ENCODE measurements at regions of chr5 and their contacts with region 1.

Region 1: DNA sequence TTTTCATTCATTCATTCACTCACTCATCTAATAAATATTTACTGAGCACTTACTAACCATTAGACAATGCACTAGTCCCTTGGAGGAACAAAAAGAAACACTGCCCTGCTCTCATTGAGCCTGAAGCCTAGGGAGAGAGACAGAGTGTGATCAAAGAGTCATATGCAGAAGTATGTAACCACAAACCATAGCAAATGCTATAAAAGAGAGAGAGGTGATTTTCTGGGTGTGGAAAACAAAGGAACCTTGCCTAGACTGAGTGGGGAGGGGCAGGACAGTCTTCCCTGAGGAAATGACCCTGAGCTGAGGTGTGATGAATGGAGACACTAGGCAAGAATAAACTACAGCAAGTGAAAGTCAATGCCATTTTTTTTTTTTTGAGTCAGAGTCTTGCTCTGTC is 10.8 kb upstream of the ADRA1B start:
- DNase-seq: peak; percentile 89 to 99
- H3K4me3 ChIP-seq: no peak overlapping the region
- H3K27ac ChIP-seq: peak overlapping the region; percentile 97
- H3K4me1 ChIP-seq: peaks cover 87% of the 10 kb centered on the region
- H3K27me3 ChIP-seq: no peaks in the 10 kb centered on the region
- CTCF ChIP-seq: no peak

Region 2: GRCh38 chr5:159341914-159342313 is 563.6 kb before region 1 on chr5:
- CTCF ChIA-PET with region 1: no interaction called
- POLR2A ChIA-PET with region 1: no interaction called
- intact Hi-C with region 1: loop called (anchors 5 kb)
- DNase-seq: peak; percentile 83 to 88
- H3K4me3 ChIP-seq: no peak overlapping the region
- H3K27ac ChIP-seq: no peak overlapping the region
- H3K4me1 ChIP-seq: peaks cover 37% of the 10 kb centered on the region
- H3K27me3 ChIP-seq: peaks cover 25% of the 10 kb centered on the region
- CTCF ChIP-seq: no peak

Region 3: DNA sequence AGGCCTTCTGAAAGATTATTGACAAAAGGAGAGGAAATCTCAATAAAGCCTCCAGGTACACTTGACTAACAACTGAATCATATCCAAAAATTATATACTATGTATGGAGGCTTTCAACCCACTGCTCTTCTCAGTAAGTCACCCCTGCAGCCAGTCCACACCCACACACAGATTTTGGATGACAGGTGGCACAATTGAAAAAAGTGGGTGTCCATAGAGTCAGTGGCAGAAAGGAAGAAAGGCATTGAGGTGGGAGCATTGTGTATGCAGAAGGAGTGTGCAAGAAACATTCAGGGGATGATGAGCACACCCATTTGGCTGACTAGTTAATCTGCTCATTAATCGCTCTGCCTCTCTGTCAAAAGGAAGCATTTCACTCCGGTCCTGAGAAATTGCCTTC is 424.6 kb before region 1 on chr5:
- CTCF ChIA-PET with region 1: no interaction called
- POLR2A ChIA-PET with region 1: interaction called, 11 read pairs
- intact Hi-C with region 1: no loop called
- DNase-seq: no peak
- H3K4me3 ChIP-seq: no peak overlapping the region
- H3K27ac ChIP-seq: no peak overlapping the region
- H3K4me1 ChIP-seq: peaks cover 12% of the 10 kb centered on the region; the same call in 1 of the 2 replicates
- H3K27me3 ChIP-seq: no peaks in the 10 kb centered on the region
- CTCF ChIP-seq: no peak

Region 4: DNA sequence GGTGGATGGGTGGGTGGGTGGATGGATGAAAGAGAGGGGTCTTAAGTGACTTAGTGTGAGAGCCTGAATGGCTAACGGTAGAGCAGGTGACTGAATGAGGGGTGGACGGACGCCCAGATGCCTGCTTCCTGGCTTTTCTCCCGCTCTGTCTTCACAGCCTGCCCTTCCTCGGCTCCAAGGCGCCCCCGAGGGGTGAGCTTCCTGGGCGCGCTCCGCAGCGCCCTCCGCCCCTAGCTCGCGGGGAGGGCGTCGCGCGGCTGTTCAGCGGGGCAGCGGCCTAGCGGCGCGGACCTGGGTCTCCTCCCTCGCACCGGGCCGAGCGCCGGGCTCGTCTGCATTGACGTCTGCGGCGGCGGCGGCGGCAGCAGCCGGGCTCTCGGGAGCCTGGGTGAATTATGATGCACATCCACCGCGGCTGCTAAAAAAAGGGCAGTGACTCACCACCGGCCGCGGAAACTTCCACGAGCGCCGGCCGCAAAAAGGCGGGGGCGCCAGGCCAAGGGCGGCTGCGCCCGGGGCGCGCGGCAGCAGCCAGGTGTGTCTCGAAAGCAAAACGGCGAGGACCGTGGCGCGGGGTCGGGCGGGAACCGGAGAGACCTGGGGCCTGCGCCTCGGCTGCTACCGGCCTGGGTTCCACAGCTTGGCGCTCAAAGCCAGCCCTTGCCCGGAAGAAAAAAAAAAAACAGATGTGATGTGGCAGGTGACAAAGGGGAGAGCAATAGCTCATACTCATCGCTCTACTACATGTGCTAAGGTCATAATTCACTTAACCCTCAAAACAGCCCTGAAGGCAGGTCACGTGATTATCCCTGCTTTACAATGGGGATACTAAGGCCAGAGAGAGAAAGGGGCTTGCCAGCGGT is 132.2 kb before region 1 on chr5:
- CTCF ChIA-PET with region 1: interaction called, 3 read pairs
- POLR2A ChIA-PET with region 1: no interaction called
- intact Hi-C with region 1: loop called (anchors 2 kb)
- DNase-seq: peak; percentile 71 to 83
- H3K4me3 ChIP-seq: peak overlapping the region; percentile 61
- H3K27ac ChIP-seq: peak overlapping the region; percentile 66
- H3K4me1 ChIP-seq: peaks cover 33% of the 10 kb centered on the region
- H3K27me3 ChIP-seq: no peaks in the 10 kb centered on the region
- CTCF ChIP-seq: peak; percentile 38; the same call in 1 of the 2 replicates

Region 5: GRCh38 chr5:159819591-159820411 is 85.7 kb before region 1 on chr5:
- CTCF ChIA-PET with region 1: no interaction called
- POLR2A ChIA-PET with region 1: interaction called, 11 read pairs
- intact Hi-C with region 1: no loop called
- DNase-seq: peak; percentile 38 to 95
- H3K4me3 ChIP-seq: no peak overlapping the region
- H3K27ac ChIP-seq: peak overlapping the region; percentile 94
- H3K4me1 ChIP-seq: peaks cover 95% of the 10 kb centered on the region
- H3K27me3 ChIP-seq: no peaks in the 10 kb centered on the region
- CTCF ChIP-seq: no peak

Region 6: DNA sequence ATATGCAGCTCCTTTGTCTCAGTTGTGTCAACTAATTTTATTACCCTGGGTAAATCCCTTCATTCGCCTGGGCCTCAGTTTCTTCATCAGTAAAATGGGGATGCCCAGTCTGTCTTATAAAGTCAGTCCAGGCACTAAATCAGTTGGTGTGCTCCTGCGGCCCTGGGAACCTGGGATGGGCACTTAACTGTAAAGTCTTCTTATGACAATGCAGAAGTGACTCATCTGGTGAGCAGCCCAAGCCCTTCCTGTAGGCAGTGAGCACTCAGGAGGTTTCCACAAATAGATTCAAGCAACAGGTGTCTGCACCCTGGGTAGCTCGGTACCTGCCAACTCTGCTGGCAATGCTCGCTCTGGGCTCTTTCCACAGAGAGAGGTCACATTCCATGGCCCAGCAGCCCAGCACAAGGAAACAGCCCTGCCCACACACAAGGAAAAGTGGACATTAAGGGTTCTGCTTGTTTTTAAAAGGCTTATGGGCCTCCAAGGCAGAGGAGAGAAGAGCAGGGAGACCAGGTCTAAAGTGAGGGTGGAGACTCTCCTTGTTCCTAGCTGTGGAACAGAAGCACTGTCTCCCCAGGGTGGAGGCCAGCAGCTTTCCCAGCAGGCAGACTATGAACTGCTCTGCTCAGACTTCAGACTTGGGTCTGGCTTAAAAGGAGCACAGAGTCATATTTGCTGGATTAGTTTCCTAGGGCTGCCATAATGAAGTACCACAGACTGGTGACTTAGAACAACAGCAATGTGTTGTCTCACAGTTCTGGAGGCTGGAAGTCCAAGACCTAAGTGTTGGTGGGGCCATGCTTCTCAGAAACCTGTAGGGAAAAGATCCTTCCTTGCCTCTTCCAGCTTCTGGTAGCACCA is 78.9 kb before region 1 on chr5:
- CTCF ChIA-PET with region 1: no interaction called
- POLR2A ChIA-PET with region 1: no interaction called
- intact Hi-C with region 1: loop called (anchors 1 kb)
- DNase-seq: peak; percentile 84 to 99
- H3K4me3 ChIP-seq: no peak overlapping the region
- H3K27ac ChIP-seq: peak overlapping the region; percentile 99
- H3K4me1 ChIP-seq: peaks cover 64% of the 10 kb centered on the region
- H3K27me3 ChIP-seq: no peaks in the 10 kb centered on the region
- CTCF ChIP-seq: no peak

Region 7: DNA sequence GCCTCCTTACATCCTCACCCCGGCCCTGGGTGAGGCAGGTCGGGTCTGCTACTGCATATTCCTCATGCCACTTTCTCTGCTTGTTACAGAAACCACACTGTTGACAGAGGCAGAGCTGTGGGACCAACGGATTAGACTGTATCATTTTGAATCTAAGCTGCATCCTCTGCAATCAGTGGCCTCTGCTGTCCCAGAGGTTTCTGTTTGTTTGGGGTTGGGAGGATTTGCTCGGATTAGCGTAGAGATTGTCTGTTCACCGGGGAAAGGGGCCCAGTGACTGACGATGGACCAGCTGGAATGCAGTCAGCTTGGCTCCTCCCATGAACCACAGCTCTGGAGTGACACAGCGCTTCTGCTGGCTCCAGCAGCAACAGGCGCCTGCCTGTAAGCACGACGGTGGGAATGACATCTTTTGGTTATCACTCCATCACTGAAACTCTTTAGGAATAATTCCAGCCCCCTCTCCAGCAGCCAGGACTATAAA is 26.5 kb before region 1 on chr5:
- CTCF ChIA-PET with region 1: interaction called, 4 read pairs
- POLR2A ChIA-PET with region 1: no interaction called
- intact Hi-C with region 1: loop called (anchors 2 kb)
- DNase-seq: peak; percentile 59 to 74
- H3K4me3 ChIP-seq: no peak overlapping the region
- H3K27ac ChIP-seq: peak overlapping the region; percentile 22; the same call in 1 of the 2 replicates
- H3K4me1 ChIP-seq: peaks cover 29% of the 10 kb centered on the region
- H3K27me3 ChIP-seq: no peaks in the 10 kb centered on the region
- CTCF ChIP-seq: no peak

Region 8: DNA sequence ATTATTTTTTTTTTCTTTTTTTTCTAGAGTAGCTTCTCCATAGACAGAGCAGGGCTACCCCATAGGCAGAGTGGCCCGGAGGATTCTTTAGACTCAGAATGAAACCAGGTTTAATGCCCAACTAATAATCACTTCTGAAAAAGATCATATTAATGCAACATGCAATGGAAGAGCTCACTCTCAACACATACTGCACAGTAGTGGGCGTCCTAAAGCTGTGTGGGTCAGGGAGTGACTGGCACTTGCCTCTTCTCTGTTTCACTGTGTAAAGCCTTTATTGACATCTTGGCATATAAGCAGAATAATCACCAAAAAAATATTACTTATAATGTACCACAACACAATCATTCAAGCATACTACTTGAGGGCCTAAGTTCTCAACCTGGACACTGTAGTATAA is 202.6 kb after region 1 on chr5:
- CTCF ChIA-PET with region 1: no interaction called
- POLR2A ChIA-PET with region 1: no interaction called
- intact Hi-C with region 1: no loop called
- DNase-seq: no peak
- H3K4me3 ChIP-seq: no peak overlapping the region
- H3K27ac ChIP-seq: no peak overlapping the region
- H3K4me1 ChIP-seq: no peaks in the 10 kb centered on the region
- H3K27me3 ChIP-seq: no peaks in the 10 kb centered on the region
- CTCF ChIP-seq: no peak